ENCODE measurements at regions of chr16 and their contacts with region 1.

Region 1: DNA sequence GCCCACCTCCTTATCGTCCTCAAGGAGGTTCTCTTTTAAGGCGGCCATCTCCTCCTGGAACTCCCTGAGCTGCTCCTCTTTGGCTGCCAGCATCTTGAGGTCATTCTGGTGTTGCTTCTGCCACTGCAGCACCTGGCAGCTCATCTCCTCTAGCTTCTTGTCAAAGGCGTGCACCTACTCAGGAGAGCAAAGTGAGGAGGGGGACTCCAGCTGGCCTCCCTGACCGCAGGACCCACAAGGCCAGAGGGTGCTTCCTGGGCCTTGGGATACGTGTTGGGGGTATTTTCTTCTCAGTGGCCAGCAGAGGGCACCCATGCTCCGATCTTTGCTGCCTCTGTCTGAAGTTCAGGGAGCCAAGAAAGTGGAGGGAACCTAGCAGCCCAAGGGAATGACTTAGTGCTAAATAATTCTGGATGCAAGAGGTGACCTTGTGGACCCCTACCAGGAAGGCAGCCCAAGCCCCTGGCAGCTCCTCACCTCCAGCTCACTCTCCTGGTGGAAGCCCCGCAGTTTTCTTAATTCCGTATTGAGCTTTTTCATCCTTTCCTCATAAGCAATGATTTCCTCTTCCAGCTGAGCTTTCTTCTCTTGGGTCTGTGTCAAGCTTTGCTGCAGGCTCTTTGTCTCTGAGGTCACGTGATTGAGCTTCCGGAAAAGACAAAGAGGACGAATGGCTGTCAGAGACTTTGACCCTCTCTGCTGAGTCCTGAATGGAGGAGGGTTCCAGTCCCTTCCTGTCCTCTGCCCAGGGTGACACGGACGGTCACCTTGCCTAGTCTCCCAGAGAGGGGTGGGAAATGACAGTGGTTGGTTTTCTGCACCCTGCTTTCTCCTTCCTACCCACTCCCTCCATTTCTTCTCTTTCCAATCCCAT is 31.4 kb downstream of the DHX38 start:
- DNase-seq: peak; percentile 60
- ATAC-seq: peak; percentile 61
- H3K4me3 Mint-ChIP-seq: no peak overlapping the region
- H3K27ac Mint-ChIP-seq: no peak overlapping the region
- H3K4me1 Mint-ChIP-seq: peaks cover 1% of the 10 kb centered on the region
- H3K27me3 Mint-ChIP-seq: no peaks in the 10 kb centered on the region
- CTCF ChIP-seq: no peak

Region 2: DNA sequence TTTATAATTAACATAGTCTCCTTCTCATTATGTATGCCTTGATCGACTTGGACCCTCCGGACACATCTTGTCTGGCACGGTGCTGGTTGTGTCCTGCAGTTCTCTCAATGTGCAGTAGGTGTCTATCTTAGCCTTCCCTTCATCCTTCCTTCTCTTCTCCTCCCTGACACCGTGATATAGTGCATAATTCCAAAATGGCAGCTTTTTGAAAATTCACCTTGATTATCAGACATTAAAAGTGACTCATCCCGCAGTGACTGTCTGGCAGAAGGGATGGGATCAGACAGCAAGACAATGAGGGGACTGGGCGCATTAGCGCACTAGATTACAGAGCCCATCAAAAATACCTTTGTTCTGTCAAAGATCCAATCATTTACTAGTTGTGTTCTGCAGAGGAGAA is 116.9 kb after region 1 on chr16:
- CTCF ChIA-PET with region 1: no interaction called
- POLR2A ChIA-PET with region 1: no interaction called
- intact Hi-C with region 1: loop called (anchors 2 kb)
- DNase-seq: no peak
- ATAC-seq: no peak
- H3K4me3 Mint-ChIP-seq: no peak overlapping the region
- H3K27ac Mint-ChIP-seq: no peak overlapping the region
- H3K4me1 Mint-ChIP-seq: no peaks in the 10 kb centered on the region
- H3K27me3 Mint-ChIP-seq: no peaks in the 10 kb centered on the region
- CTCF ChIP-seq: no peak

Region 3: DNA sequence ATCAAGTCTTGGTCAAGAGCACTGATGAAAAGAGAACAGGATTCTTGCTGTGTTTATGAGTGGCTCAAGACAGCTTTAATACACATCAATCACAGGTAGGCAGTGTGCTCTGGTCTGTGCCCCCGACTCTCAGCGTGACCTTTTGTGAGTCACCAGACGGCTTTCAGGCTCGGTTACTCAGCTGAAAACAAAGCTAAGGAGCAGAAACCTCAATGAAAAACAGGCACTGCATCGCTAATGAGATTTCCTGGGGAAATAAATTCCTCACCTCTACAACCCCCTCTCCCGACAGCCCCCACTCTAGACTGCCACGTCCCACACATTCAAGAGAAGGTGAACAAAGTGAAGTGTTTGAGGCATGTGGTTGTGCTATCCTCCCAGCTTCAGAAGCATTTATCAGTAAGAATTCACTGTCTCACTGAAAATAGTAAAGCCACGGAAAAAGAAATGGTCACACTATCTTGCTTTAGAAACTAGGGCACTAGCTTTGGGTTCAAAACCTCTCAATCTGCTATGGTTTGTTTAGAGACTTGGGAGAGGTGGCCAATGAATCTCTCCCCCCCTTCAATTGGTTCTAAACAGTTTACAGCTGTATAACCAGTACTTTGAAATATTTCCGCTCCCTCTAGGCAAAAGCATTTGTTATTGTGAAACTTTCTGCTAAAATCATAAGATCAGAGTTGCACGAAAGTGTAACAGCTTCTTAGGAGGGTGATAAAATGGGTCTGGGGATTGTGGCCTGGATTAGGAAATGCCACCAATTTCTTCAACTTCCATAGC is 246.5 kb after region 1 on chr16:
- CTCF ChIA-PET with region 1: no interaction called
- POLR2A ChIA-PET with region 1: no interaction called
- intact Hi-C with region 1: no loop called
- DNase-seq: no peak
- ATAC-seq: no peak
- H3K4me3 Mint-ChIP-seq: no peak overlapping the region
- H3K27ac Mint-ChIP-seq: no peak overlapping the region
- H3K4me1 Mint-ChIP-seq: no peaks in the 10 kb centered on the region
- H3K27me3 Mint-ChIP-seq: no peaks in the 10 kb centered on the region
- CTCF ChIP-seq: no peak

Region 4: DNA sequence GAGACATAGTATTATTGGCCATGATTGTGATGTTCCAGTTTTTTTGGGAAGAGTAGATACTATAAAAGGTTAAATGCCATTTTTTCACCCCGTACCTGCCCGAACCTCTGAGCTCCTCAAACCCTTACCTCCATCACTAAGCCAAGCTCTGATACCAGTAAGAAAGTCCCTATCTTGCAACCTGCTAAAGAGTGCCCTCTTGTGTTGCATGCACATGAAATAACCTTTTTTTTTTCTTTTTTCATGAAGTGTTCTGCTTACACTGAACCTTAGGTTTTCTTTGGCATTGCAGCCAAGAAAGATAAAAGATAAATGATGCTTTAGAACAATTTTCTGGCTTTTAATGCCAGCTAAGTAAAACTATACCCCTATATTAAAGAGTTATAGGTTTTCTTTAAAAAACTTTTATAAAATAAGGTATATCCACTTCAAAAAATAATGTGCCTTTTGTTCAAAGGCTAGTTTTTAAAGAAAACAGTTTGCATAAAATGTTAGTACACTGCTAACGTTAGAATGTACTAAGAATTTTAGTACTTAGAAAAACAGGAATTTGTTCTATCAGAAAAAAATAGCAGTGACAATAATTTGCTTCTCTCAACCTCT is 342.3 kb after region 1 on chr16:
- CTCF ChIA-PET with region 1: interaction called, 43 read pairs
- POLR2A ChIA-PET with region 1: no interaction called
- intact Hi-C with region 1: no loop called
- DNase-seq: no peak
- ATAC-seq: no peak
- H3K4me3 Mint-ChIP-seq: no peak overlapping the region
- H3K27ac Mint-ChIP-seq: no peak overlapping the region
- H3K4me1 Mint-ChIP-seq: peaks cover 17% of the 10 kb centered on the region
- H3K27me3 Mint-ChIP-seq: no peaks in the 10 kb centered on the region
- CTCF ChIP-seq: no peak

Region 5: DNA sequence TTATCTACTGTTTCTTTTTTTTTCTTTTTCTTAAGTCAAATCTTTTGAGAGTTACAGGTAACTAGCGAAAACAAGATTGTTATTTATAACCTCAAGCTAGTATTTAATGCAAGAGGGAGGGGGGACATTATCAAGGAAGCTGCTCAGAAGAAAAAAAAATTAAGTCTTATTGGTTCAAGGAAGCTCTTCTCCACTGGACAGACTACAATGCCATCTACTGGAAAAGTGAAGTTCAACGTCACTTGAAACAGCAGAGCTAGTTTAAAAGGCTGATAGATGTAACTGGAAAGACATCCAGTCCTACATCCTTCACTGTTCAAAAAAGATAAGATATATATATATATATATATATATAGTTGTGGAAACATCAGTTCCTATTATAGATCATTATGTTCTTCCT is 1753.6 kb after region 1 on chr16:
- CTCF ChIA-PET with region 1: interaction called, 12 read pairs
- POLR2A ChIA-PET with region 1: no interaction called
- intact Hi-C with region 1: no loop called
- DNase-seq: no peak
- ATAC-seq: no peak
- H3K4me3 Mint-ChIP-seq: no peak overlapping the region
- H3K27ac Mint-ChIP-seq: no peak overlapping the region
- H3K4me1 Mint-ChIP-seq: no peaks in the 10 kb centered on the region
- H3K27me3 Mint-ChIP-seq: peaks cover under 1% of the 10 kb centered on the region
- CTCF ChIP-seq: no peak

Region 6: GRCh38 chr16:73956587-73957494 is 1831.8 kb after region 1 on chr16:
- CTCF ChIA-PET with region 1: interaction called, 12 read pairs
- POLR2A ChIA-PET with region 1: no interaction called
- intact Hi-C with region 1: no loop called
- DNase-seq: no peak
- ATAC-seq: no peak
- H3K4me3 Mint-ChIP-seq: no peak overlapping the region
- H3K27ac Mint-ChIP-seq: no peak overlapping the region
- H3K4me1 Mint-ChIP-seq: no peaks in the 10 kb centered on the region
- H3K27me3 Mint-ChIP-seq: no peaks in the 10 kb centered on the region
- CTCF ChIP-seq: peak; percentile 44

Region 7: GRCh38 chr16:74034862-74035261 is 1909.9 kb after region 1 on chr16:
- CTCF ChIA-PET with region 1: no interaction called
- POLR2A ChIA-PET with region 1: no interaction called
- intact Hi-C with region 1: loop called (anchors 10 kb)
- DNase-seq: no peak
- ATAC-seq: no peak
- H3K4me3 Mint-ChIP-seq: no peak overlapping the region
- H3K27ac Mint-ChIP-seq: no peak overlapping the region
- H3K4me1 Mint-ChIP-seq: no peaks in the 10 kb centered on the region
- H3K27me3 Mint-ChIP-seq: no peaks in the 10 kb centered on the region
- CTCF ChIP-seq: no peak

Measured in activated B cell treated with CpG ODN at 0.5 μM for 24 hours (primary cell).